ENCODE measurements at regions of chr14 and their contacts with region 1.

Region 1: GRCh38 chr14:56339855-56340701 is 221.9 kb downstream of the PELI2 start:
- DNase-seq: peak; percentile 60 to 86
- ATAC-seq: peak; percentile 93 to 99
- H3K4me3 ChIP-seq: no peak overlapping the region
- H3K27ac ChIP-seq: peak overlapping the region; percentile 73 to 85
- H3K4me1 ChIP-seq: peaks cover 13% of the 10 kb centered on the region
- CTCF ChIP-seq: peak; percentile 81
- EP300 ChIP-seq: no peak
- POLR2A ChIP-seq: no peak
- RAD21 ChIP-seq: peak; percentile 88 to 94

Region 2: GRCh38 chr14:55707365-55707804 is 632.7 kb before region 1 on chr14:
- CTCF ChIA-PET with region 1: interaction called, 41 read pairs
- POLR2A ChIA-PET with region 1: no interaction called
- DNase-seq: peak; percentile 41 to 61
- ATAC-seq: peak; percentile 56 to 77; a peak in 4 of 6 replicates
- H3K4me3 ChIP-seq: no peak overlapping the region
- H3K27ac ChIP-seq: peak overlapping the region in 1 of 2 experiments; percentile 34; a peak in 1 of 6 replicates
- H3K4me1 ChIP-seq: peaks cover 18% of the 10 kb centered on the region
- CTCF ChIP-seq: peak; percentile 86
- EP300 ChIP-seq: no peak
- POLR2A ChIP-seq: no peak
- RAD21 ChIP-seq: peak; percentile 90 to 94

Region 3: DNA sequence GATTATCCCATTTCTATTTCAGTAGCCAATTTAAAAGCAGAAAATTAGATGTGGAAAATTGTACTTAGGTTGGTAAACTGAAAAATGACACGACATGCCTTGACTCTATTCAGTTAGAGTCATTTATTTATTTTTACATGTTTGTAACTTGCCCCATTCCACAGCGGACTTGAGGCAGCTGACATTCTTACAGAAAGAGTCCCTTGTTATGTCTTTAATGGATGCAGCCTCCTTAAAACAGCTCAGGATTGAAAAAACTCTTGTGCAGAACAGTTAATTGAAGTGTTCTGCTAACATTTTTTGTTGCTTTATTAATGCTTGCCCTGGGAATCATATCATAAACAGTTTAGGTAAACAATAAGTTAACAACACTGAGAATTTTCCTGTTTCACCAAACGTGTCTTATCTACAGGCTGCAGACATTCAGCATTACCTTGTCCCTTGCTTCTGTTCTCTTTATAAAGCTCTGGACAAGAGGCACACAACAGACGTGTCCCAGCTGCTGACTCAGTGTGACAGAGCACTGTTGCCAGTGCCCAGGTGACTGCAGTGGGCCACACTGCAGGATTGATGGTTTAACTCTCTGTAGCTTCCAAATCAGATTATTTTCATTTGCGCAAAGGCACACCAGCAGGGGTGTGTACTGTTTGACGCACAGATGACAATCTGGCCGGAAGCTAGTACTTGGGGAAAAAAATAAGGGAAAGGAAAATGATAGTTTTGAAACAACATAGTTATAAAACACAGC is 120.2 kb before region 1 on chr14:
- CTCF ChIA-PET with region 1: no interaction called
- POLR2A ChIA-PET with region 1: no interaction called
- DNase-seq: peak in 1 of 2 experiments; percentile 23
- ATAC-seq: no peak
- H3K4me3 ChIP-seq: no peak overlapping the region
- H3K27ac ChIP-seq: peak overlapping the region; percentile 38 to 42; a peak in 2 of 6 replicates
- H3K4me1 ChIP-seq: peaks cover 46% of the 10 kb centered on the region
- CTCF ChIP-seq: no peak
- EP300 ChIP-seq: no peak
- POLR2A ChIP-seq: no peak
- RAD21 ChIP-seq: no peak

Region 4: DNA sequence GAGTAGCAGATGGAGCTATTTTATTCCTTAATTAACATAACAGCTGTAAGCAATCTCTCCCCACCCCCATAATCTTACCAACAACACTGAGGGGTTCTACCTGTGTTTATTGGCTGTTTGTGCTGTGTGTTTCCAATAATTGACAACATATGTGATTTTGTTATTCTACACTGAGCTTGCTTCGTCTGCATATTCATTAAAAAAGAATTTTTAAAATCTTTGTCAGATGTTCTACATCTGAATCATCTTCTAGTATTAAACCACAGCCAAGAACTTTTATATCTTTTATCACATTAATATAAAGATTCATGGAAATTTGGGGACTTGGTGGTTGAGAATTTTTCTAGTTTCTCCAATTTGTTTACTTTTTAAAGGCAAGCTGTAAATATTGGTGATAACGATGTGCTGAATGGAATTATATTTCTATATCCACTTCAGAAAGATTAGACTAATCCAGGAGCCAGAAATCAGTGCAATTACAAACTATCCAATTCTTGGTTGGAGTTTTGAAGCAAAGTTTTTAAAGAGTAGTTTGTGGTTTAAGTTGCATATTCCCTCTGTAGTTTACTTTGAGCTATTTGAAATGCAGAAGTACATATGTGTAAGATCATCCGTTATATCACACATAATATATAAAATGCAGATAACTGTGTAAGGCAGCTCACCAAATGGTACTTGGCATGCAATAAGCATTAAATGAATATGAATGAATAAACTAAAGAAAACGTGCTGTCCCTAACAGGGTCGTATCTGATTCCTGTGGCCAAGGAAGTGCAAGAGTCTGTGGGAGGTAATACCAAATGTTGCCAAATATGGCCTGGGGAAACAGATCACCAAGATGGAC is 15.0 kb before region 1 on chr14:
- CTCF ChIA-PET with region 1: interaction called, 14 read pairs
- POLR2A ChIA-PET with region 1: no interaction called
- DNase-seq: no peak
- ATAC-seq: no peak
- H3K4me3 ChIP-seq: no peak overlapping the region
- H3K27ac ChIP-seq: no peak overlapping the region
- H3K4me1 ChIP-seq: no peaks in the 10 kb centered on the region
- CTCF ChIP-seq: no peak
- EP300 ChIP-seq: no peak
- POLR2A ChIP-seq: no peak
- RAD21 ChIP-seq: no peak